HepG2 (cell line): ENCODE measurements at regions of chr18 and their contacts with region 1.

Region 1: DNA sequence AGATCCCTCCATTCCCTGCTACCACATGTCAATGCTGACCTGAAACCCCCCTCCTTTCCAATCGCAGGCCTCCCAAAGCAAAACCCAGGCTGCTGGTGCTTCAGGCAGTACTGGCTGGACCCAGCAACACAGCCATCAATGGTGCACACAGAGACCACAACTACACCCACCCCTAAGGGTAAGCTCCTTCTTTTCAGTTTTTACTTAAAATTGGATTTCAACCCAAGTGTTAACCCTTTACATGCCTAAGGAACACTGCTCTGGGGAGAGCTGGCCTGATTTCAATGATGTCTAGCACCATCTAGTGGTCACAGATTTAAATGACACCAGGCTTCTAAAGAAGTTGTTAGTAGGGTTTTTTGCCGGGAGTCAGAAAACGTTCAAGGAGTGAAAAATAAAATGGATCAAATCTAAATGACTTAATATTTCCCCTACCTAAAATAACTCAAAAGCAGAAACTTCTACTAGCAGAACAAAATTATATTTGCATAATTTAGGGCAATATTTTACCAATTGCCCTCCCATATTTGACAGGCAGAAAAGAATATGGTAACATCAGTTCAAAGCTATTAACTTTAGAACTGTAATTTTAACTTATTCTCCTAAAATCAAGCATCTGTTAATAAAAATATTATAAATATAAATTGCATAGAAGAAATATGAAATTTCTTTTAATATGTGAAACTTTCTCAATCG is 24.6 kb downstream of the FECH start:
- DNase-seq: peak; percentile 47
- ATAC-seq: peak; percentile 45; the same call in 1 of the 3 replicates
- H3K4me3 ChIP-seq: no peak overlapping the region
- H3K27ac ChIP-seq: no peak overlapping the region
- H3K4me1 ChIP-seq: no peaks in the 10 kb centered on the region
- H3K27me3 ChIP-seq: no peaks in the 10 kb centered on the region
- CTCF ChIP-seq: peak; percentile 81
- EP300 ChIP-seq: no peak
- POLR2A ChIP-seq: no peak
- RAD21 ChIP-seq: peak; percentile 64; the same call in 1 of the 2 replicates

Region 2: DNA sequence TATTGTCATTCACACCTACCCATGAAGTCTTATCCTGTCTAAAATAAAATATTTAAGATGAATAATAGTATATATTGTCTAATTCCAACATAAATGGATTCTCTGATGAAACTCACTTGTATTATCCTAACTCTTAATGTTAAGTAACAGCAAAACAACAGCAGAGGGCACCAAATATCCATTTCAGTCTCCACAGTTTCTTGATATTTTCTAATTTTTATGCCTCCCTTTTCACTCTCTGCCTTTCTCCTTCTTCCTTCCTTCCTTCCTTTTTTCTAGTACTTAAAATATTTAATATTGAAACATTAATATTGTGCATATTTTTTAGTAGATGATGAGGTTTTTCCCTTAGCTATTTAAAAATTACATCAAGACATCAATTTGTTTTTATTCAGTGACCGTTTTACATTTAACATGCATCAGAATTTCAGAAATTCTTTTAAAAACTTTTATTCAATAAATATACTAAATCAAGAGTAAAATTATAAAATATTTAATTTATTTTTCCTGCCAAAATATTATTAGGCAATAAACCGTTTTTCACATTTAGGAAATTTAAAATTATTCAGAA is 813.1 kb before region 1 on chr18:
- CTCF ChIA-PET with region 1: interaction called, 14 read pairs
- POLR2A ChIA-PET with region 1: no interaction called
- in situ Hi-C with region 1: no loop called
- intact Hi-C with region 1: no loop called
- DNase-seq: peak; percentile 18
- ATAC-seq: no peak
- H3K4me3 ChIP-seq: no peak overlapping the region
- H3K27ac ChIP-seq: no peak overlapping the region
- H3K4me1 ChIP-seq: no peaks in the 10 kb centered on the region
- H3K27me3 ChIP-seq: no peaks in the 10 kb centered on the region
- CTCF ChIP-seq: peak; percentile 53
- EP300 ChIP-seq: no peak
- POLR2A ChIP-seq: no peak
- RAD21 ChIP-seq: no peak

Region 3: DNA sequence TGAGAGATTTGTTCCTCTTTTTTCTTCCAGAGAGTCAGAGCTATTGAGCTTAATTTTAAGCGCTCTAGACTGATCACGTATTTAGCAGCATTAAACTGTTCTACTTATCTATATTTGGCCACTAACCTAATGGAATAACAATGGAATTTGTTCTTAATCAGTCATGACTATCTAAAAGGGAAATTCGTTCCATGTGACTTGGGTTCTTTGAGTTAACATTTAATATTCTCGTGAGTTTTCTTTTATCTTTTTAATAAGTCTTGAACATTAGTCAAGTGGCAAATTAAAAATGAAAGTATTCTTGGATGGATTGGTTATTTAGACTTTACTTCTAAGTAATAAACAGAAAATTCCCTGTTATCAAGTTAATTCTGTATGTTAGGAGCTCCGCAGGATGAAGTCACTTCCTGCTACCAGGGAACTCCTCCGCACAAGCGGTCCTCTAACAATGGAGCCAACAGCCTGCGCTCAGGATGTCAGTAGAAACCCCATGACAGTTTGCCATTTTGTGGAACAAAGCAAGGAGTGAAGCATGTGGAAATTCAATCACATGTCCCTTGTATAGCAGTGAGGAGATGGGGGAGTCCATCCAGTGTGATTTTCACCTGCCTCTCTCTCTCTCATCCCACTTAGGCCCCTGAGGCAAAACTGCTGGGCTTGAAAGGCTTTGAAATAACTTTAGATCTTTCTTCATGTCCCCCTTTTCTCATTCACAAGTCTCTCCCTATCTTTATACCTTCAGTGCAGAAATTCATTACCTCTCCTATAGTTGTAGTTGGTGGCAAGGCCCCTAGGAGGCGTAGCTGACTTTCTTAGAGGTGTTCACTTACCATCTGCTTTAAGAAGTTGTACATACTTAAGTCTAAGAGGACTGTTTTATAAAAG is 772.6 kb before region 1 on chr18:
- CTCF ChIA-PET with region 1: no interaction called
- POLR2A ChIA-PET with region 1: no interaction called
- in situ Hi-C with region 1: loop called (anchors 25 kb)
- intact Hi-C with region 1: no loop called
- DNase-seq: peak; percentile 33
- ATAC-seq: peak; percentile 65
- H3K4me3 ChIP-seq: no peak overlapping the region
- H3K27ac ChIP-seq: no peak overlapping the region
- H3K4me1 ChIP-seq: no peaks in the 10 kb centered on the region
- H3K27me3 ChIP-seq: no peaks in the 10 kb centered on the region
- CTCF ChIP-seq: peak; percentile 55
- EP300 ChIP-seq: no peak
- POLR2A ChIP-seq: no peak
- RAD21 ChIP-seq: no peak

Region 4: GRCh38 chr18:57333940-57334339 is 227.9 kb before region 1 on chr18:
- CTCF ChIA-PET with region 1: no interaction called
- POLR2A ChIA-PET with region 1: no interaction called
- in situ Hi-C with region 1: no loop called
- intact Hi-C with region 1: no loop called
- DNase-seq: no peak
- ATAC-seq: peak; percentile 35; the same call in 2 of the 3 replicates
- H3K4me3 ChIP-seq: no peak overlapping the region
- H3K27ac ChIP-seq: no peak overlapping the region
- H3K4me1 ChIP-seq: no peaks in the 10 kb centered on the region
- H3K27me3 ChIP-seq: peaks cover 1 to 3% of the 10 kb centered on the region in 2 experiments; a peak in 2 of 5 replicates
- CTCF ChIP-seq: no peak
- EP300 ChIP-seq: no peak
- POLR2A ChIP-seq: no peak
- RAD21 ChIP-seq: no peak